ENCODE measurements at regions of chr1 and their contacts with region 1.

Region 1: GRCh38 chr1:205711104-205712020 is 31.1 kb upstream of the SLC45A3 start:
- DNase-seq: peak; percentile 88
- H3K4me3 ChIP-seq: no peak overlapping the region
- H3K27ac ChIP-seq: peak overlapping the region; percentile 44
- H3K4me1 ChIP-seq: peaks cover 12% of the 10 kb centered on the region
- H3K27me3 ChIP-seq: no peaks in the 10 kb centered on the region
- CTCF ChIP-seq: peak; percentile 67 to 70
- POLR2A ChIP-seq: no peak

Region 2: GRCh38 chr1:205528887-205529825 is 182.2 kb before region 1 on chr1:
- CTCF ChIA-PET with region 1: interaction called, 19 read pairs
- POLR2A ChIA-PET with region 1: no interaction called
- dilution Hi-C with region 1: no loop called
- intact Hi-C with region 1: loop called (anchors 5 kb)
- DNase-seq: peak; percentile 58
- H3K4me3 ChIP-seq: peak overlapping the region in 1 of 3 experiments; percentile 9
- H3K27ac ChIP-seq: no peak overlapping the region
- H3K4me1 ChIP-seq: peaks cover 3% of the 10 kb centered on the region
- H3K27me3 ChIP-seq: no peaks in the 10 kb centered on the region
- CTCF ChIP-seq: peak; percentile 90 to 95
- POLR2A ChIP-seq: no peak

Region 3: GRCh38 chr1:205591522-205592351 is 119.6 kb before region 1 on chr1:
- CTCF ChIA-PET with region 1: interaction called, 139 read pairs
- POLR2A ChIA-PET with region 1: no interaction called
- dilution Hi-C with region 1: no loop called
- intact Hi-C with region 1: loop called (anchors 1 kb)
- DNase-seq: peak; percentile 83
- H3K4me3 ChIP-seq: peak overlapping the region in 1 of 3 experiments; percentile 11
- H3K27ac ChIP-seq: no peak overlapping the region
- H3K4me1 ChIP-seq: peaks cover 8% of the 10 kb centered on the region
- H3K27me3 ChIP-seq: no peaks in the 10 kb centered on the region
- CTCF ChIP-seq: peak; percentile 95 to 97
- POLR2A ChIP-seq: no peak

Region 4: DNA sequence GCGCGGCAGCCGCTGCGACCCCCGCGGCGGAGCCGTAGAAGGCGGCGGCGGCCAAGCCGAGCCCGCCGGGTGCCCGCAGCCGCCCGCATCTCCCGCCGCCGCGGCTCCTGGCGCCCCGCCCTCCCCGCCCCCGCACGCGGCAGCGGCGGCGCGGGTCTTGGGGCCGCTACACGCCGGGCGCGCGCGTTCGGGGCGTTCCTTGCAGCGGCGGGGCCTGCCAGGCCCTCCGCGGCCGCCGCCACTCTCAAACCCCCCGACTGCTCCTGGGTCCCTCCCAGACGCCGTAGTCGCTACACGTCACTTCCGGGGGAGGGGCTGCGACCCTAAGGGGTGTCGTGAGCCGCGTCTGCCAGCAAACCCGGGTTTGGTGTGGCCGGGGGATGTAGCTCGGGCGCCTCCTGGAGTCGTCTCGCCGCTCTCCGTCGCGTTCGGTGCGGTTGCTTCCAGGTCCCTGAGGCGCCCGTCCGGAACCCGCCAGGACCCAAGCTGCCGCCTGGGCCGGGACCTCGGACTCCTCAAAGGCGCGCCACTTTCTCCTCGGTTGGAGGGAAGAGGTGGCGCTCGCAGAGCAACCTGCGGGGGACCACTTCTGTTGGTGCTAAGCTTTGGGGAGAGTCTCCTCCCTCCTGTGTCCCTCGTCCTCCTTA is 79.5 kb before region 1 on chr1 and contains the start of gene ELK4:
- CTCF ChIA-PET with region 1: interaction called, 12 read pairs
- POLR2A ChIA-PET with region 1: interaction called, 3 read pairs
- dilution Hi-C with region 1: no loop called
- intact Hi-C with region 1: loop called (anchors 1 kb)
- DNase-seq: peak; percentile 98
- H3K4me3 ChIP-seq: peak within 1 kb of the TSS; percentile 88 to 97 (median 92)
- H3K27ac ChIP-seq: peak within 1 kb of the TSS; percentile 82
- H3K4me1 ChIP-seq: peaks cover 29% of the 10 kb centered on the region
- H3K27me3 ChIP-seq: no peaks in the 10 kb centered on the region
- CTCF ChIP-seq: peak; percentile 72 to 90
- POLR2A ChIP-seq: peak; percentile 88
- total RNA-seq, gene ELK4: 78.7 and 107 TPM in 2 replicates

Region 5: GRCh38 chr1:205680073-205680851 is 31.1 kb before region 1 on chr1 and contains the start of gene SLC45A3:
- CTCF ChIA-PET with region 1: interaction called, 71 read pairs
- POLR2A ChIA-PET with region 1: interaction called, 4 read pairs
- dilution Hi-C with region 1: no loop called
- intact Hi-C with region 1: loop called (anchors 1 kb)
- DNase-seq: no peak
- H3K4me3 ChIP-seq: peak within 1 kb of the TSS; percentile 66 to 82 (median 72)
- H3K27ac ChIP-seq: peak within 1 kb of the TSS; percentile 95
- H3K4me1 ChIP-seq: peaks cover 19% of the 10 kb centered on the region
- H3K27me3 ChIP-seq: no peaks in the 10 kb centered on the region
- CTCF ChIP-seq: no peak
- POLR2A ChIP-seq: no peak
- total RNA-seq, gene SLC45A3: 15.6 and 16.9 TPM in 2 replicates

Region 6: GRCh38 chr1:205700865-205701401 is 10.4 kb before region 1 on chr1:
- CTCF ChIA-PET with region 1: interaction called, 19 read pairs
- POLR2A ChIA-PET with region 1: interaction called, 3 read pairs
- dilution Hi-C with region 1: no loop called
- intact Hi-C with region 1: no loop called
- DNase-seq: peak; percentile 90
- H3K4me3 ChIP-seq: no peak overlapping the region
- H3K27ac ChIP-seq: peak overlapping the region; percentile 20
- H3K4me1 ChIP-seq: peaks cover 16% of the 10 kb centered on the region
- H3K27me3 ChIP-seq: no peaks in the 10 kb centered on the region
- CTCF ChIP-seq: no peak
- POLR2A ChIP-seq: no peak

Region 7: GRCh38 chr1:205741681-205742080 is 30.3 kb after region 1 on chr1:
- CTCF ChIA-PET with region 1: interaction called, 11 read pairs
- POLR2A ChIA-PET with region 1: no interaction called
- dilution Hi-C with region 1: no loop called
- intact Hi-C with region 1: no loop called
- DNase-seq: no peak
- H3K4me3 ChIP-seq: no peak overlapping the region
- H3K27ac ChIP-seq: no peak overlapping the region
- H3K4me1 ChIP-seq: peaks cover 6% of the 10 kb centered on the region
- H3K27me3 ChIP-seq: no peaks in the 10 kb centered on the region
- CTCF ChIP-seq: no peak
- POLR2A ChIP-seq: no peak

Region 8: DNA sequence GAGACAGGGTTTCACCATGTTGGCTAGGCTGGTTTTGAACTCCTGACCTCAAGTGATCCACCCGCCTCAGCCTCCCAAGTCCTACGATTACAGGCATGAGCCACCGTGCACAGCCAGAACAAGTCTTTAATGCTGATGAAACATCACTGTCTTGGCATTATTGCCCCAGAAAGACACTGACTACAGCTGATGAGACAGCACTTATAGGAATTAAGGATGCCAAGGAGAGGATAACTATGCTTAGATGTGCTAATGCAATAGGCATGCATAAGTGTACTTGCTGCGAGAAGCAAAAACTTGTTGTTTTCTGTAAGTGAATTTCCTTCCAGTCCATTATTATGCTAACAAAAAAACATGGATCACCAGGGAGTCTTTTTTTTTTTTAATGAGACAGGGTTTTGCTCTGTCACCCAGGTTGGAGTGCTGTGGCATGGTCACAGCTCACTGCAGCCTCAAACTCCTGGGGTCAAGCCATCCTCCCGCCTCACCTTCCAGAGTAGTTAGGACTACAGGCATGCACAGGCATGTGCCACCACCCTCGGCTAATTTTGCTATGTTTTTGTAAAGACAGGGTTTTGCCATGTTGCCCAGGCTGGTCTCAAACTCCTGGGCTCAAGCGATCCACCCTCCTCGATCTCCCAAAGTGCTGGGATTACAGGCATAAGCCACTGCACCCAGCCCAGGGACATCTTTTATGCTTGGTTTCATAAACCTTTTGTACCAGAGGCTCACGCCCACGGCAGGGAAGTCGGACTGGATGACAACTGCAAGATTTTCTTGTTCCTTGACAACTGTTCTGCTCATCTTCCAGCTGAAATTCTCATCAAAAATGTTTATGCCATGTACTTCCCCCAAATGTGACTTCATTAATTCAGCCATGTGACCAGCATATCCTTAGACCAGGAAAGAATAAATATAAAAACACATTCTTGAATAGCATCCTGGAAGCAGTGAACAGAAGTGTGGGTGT is 364.7 kb after region 1 on chr1:
- CTCF ChIA-PET with region 1: no interaction called
- POLR2A ChIA-PET with region 1: no interaction called
- dilution Hi-C with region 1: no loop called
- intact Hi-C with region 1: no loop called
- DNase-seq: no peak
- H3K4me3 ChIP-seq: no peak overlapping the region
- H3K27ac ChIP-seq: no peak overlapping the region
- H3K4me1 ChIP-seq: no peaks in the 10 kb centered on the region
- H3K27me3 ChIP-seq: peaks cover 0 to 9% of the 10 kb centered on the region in 2 experiments
- CTCF ChIP-seq: no peak
- POLR2A ChIP-seq: no peak

Measured in endothelial cell of umbilical vein (primary cell).